ENCODE measurements at regions of chr15 and their contacts with region 1.

Region 1: GRCh38 chr15:40323239-40323952 is at the start of gene INAFM2:
- DNase-seq: peak; percentile 77 to 91 (median 89)
- ATAC-seq: peak; percentile 95
- H3K4me3 ChIP-seq: peak within 1 kb of the TSS; percentile 34
- H3K4me3 Mint-ChIP-seq: peak within 1 kb of the TSS; percentile 69 to 89 (median 84)
- H3K27ac ChIP-seq: peak within 1 kb of the TSS; percentile 66
- H3K27ac Mint-ChIP-seq: peak within 1 kb of the TSS in 8 of 9 donors; percentile 56 to 86 (median 80)
- H3K4me1 ChIP-seq: peaks cover 15% of the 10 kb centered on the region in 2 donors
- H3K4me1 Mint-ChIP-seq: peaks cover 19 to 51% (median 43%) of the 10 kb centered on the region in 7 donors
- H3K27me3 ChIP-seq: no peaks in the 10 kb centered on the region
- H3K27me3 Mint-ChIP-seq: peaks cover 0 to 23% (median 0%) of the 10 kb centered on the region in 5 donors
- total RNA-seq, gene INAFM2: 7.1 to 21.2 (median 12.7) TPM

Region 2: GRCh38 chr15:39934397-39935071 is 388.9 kb before region 1 on chr15:
- CTCF ChIA-PET with region 1: no interaction called
- POLR2A ChIA-PET with region 1: no interaction called
- intact Hi-C with region 1: loop called in 1 of 2 experiments (anchors 5 kb)
- DNase-seq: peak in 5 of 9 donors; percentile 5 to 14 (median 9)
- ATAC-seq: no peak
- H3K4me3 ChIP-seq: peak overlapping the region; percentile 76
- H3K4me3 Mint-ChIP-seq: peak overlapping the region; percentile 86 to 95 (median 89)
- H3K27ac ChIP-seq: peak overlapping the region; percentile 78
- H3K27ac Mint-ChIP-seq: peak overlapping the region; percentile 20 to 91 (median 64)
- H3K4me1 ChIP-seq: peaks cover 14 to 16% of the 10 kb centered on the region in 2 donors
- H3K4me1 Mint-ChIP-seq: peaks cover 28 to 50% (median 33%) of the 10 kb centered on the region in 7 donors
- H3K27me3 ChIP-seq: no peaks in the 10 kb centered on the region
- H3K27me3 Mint-ChIP-seq: peaks cover 0 to 6% (median 0%) of the 10 kb centered on the region in 5 donors

Region 3: GRCh38 chr15:40160689-40161688 is 162.4 kb before region 1 on chr15 and contains the start of gene BUB1B:
- CTCF ChIA-PET with region 1: no interaction called
- POLR2A ChIA-PET with region 1: no interaction called
- intact Hi-C with region 1: loop called (anchors 1 to 5 kb)
- DNase-seq: peak; percentile 79 to 94 (median 92)
- ATAC-seq: peak; percentile 100
- H3K4me3 ChIP-seq: peak within 1 kb of the TSS; percentile 80
- H3K4me3 Mint-ChIP-seq: peak within 1 kb of the TSS in 2 of 10 donors; percentile 15 to 51
- H3K27ac ChIP-seq: peak within 1 kb of the TSS; percentile 29
- H3K27ac Mint-ChIP-seq: no peak within 1 kb of the TSS
- H3K4me1 ChIP-seq: peaks cover 0 to 7% of the 10 kb centered on the region in 2 donors
- H3K4me1 Mint-ChIP-seq: peaks cover 0 to 12% (median 0%) of the 10 kb centered on the region in 7 donors
- H3K27me3 ChIP-seq: no peaks in the 10 kb centered on the region
- H3K27me3 Mint-ChIP-seq: no peaks in the 10 kb centered on the region
- total RNA-seq, gene BUB1B: 0.41 to 55.7 (median 1.2) TPM

Region 4: DNA sequence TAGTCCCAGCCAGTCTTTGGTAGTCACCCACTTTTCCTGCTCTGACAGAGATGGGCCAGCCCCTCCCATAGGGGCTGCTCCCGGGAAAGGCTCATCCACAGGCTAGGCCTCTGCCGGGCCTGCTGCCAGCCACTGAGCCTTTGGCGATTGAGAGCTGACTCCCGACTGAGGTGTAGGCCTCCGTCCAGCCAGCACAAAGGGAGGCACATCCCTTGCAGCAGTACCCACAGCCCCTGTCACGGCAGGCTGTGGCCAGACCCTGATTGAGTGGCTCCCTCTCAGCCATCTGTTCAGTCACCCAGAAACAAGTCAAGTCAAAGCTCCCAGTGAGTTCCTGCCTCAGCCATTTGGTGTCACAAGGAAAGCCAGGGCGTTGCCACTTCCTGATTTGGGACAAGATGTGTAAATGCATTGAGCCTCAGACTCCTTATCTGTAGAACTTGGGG is 90.7 kb before region 1 on chr15:
- CTCF ChIA-PET with region 1: no interaction called
- POLR2A ChIA-PET with region 1: no interaction called
- intact Hi-C with region 1: no loop called
- DNase-seq: no peak
- ATAC-seq: no peak
- H3K4me3 ChIP-seq: no peak overlapping the region
- H3K4me3 Mint-ChIP-seq: no peak overlapping the region
- H3K27ac ChIP-seq: no peak overlapping the region
- H3K27ac Mint-ChIP-seq: no peak overlapping the region
- H3K4me1 ChIP-seq: no peaks in the 10 kb centered on the region
- H3K4me1 Mint-ChIP-seq: peaks cover 0 to 3% (median 0%) of the 10 kb centered on the region in 7 donors
- H3K27me3 ChIP-seq: no peaks in the 10 kb centered on the region
- H3K27me3 Mint-ChIP-seq: peaks cover 1 to 5% (median 1%) of the 10 kb centered on the region in 5 donors

Region 5: GRCh38 chr15:40357723-40358470 is 34.5 kb after region 1 on chr15 and contains the start of gene DISP2:
- CTCF ChIA-PET with region 1: no interaction called
- POLR2A ChIA-PET with region 1: no interaction called
- intact Hi-C with region 1: loop called (anchors 1 to 2 kb)
- DNase-seq: peak; percentile 80 to 97 (median 91)
- ATAC-seq: peak; percentile 94
- H3K4me3 ChIP-seq: peak within 1 kb of the TSS; percentile 63
- H3K4me3 Mint-ChIP-seq: peak within 1 kb of the TSS; percentile 75 to 90 (median 83)
- H3K27ac ChIP-seq: no peak within 1 kb of the TSS
- H3K27ac Mint-ChIP-seq: peak within 1 kb of the TSS in 2 of 9 donors; percentile 38 to 48
- H3K4me1 ChIP-seq: peaks cover 0 to 12% of the 10 kb centered on the region in 2 donors
- H3K4me1 Mint-ChIP-seq: peaks cover 7 to 15% (median 13%) of the 10 kb centered on the region in 7 donors
- H3K27me3 ChIP-seq: no peaks in the 10 kb centered on the region
- H3K27me3 Mint-ChIP-seq: peaks cover 0 to 30% (median 9%) of the 10 kb centered on the region in 5 donors
- total RNA-seq, gene DISP2: 0.05 to 0.51 (median 0.07) TPM in 4 of 5 experiments, not detected in the other

Region 6: DNA sequence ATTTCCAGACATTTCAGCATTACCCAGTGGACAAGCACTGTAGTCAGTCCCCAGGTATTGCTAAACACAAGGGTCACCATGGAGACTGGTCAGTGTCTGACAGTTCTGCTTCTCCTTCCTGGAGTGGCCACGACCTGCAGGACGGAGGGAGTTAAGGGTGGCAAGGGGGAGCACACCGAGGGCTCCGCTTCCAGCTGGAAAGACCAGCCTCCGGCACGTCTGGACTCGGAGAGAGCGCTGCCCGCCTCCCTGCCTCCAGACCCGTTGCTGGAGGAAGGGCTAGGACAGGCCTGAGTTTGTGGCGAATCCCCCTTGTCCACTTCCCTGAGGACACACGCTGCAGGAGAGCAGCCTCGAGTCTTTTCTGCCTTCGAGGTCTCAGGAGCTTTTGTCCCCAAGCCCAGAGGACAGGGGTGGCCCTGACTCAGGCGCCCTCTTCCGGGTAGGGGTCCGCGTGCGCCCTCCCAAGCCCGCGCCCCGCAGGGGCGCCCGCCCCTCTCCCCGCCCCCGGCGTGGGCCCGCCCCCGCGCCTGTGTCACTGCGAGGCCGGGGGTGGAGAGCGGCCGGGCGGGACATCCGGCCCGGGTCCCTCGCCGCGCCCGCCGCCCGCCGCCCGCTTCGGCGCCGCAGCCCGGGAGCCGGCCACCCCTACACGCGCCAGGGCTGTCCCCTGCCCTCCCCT is 147.2 kb after region 1 on chr15 and contains the start of gene CHST14:
- CTCF ChIA-PET with region 1: no interaction called
- POLR2A ChIA-PET with region 1: no interaction called
- intact Hi-C with region 1: loop called in 1 of 2 experiments (anchors 1 kb)
- DNase-seq: peak; percentile 24 to 68 (median 53)
- ATAC-seq: peak; percentile 88
- H3K4me3 ChIP-seq: peak within 1 kb of the TSS; percentile 89
- H3K4me3 Mint-ChIP-seq: peak within 1 kb of the TSS; percentile 90 to 96 (median 92)
- H3K27ac ChIP-seq: peak within 1 kb of the TSS; percentile 81
- H3K27ac Mint-ChIP-seq: peak within 1 kb of the TSS; percentile 80 to 95 (median 87)
- H3K4me1 ChIP-seq: peaks cover 8 to 16% of the 10 kb centered on the region in 2 donors
- H3K4me1 Mint-ChIP-seq: peaks cover 15 to 47% (median 37%) of the 10 kb centered on the region in 7 donors
- H3K27me3 ChIP-seq: no peaks in the 10 kb centered on the region
- H3K27me3 Mint-ChIP-seq: peaks cover 0 to 3% (median 0%) of the 10 kb centered on the region in 5 donors
- total RNA-seq, gene CHST14: 7.3 to 12.5 (median 10.8) TPM

Region 7: GRCh38 chr15:40731034-40731433 is 407.6 kb after region 1 on chr15:
- CTCF ChIA-PET with region 1: no interaction called
- POLR2A ChIA-PET with region 1: no interaction called
- intact Hi-C with region 1: no loop called
- DNase-seq: no peak
- ATAC-seq: no peak
- H3K4me3 ChIP-seq: no peak overlapping the region
- H3K4me3 Mint-ChIP-seq: no peak overlapping the region
- H3K27ac ChIP-seq: no peak overlapping the region
- H3K27ac Mint-ChIP-seq: peak overlapping the region in 2 of 9 donors; percentile 53 to 67
- H3K4me1 ChIP-seq: no peaks in the 10 kb centered on the region
- H3K4me1 Mint-ChIP-seq: peaks cover 0 to 3% (median 0%) of the 10 kb centered on the region in 7 donors
- H3K27me3 ChIP-seq: no peaks in the 10 kb centered on the region
- H3K27me3 Mint-ChIP-seq: no peaks in the 10 kb centered on the region